PC-3 (cell line): ENCODE measurements at regions of chr11 and their contacts with region 1.

Region 1: GRCh38 chr11:27904358-27905055 is 203.4 kb downstream of the KIF18A start:
- DNase-seq: peak; percentile 85
- ATAC-seq: peak; percentile 78
- H3K4me3 ChIP-seq: peak overlapping the region; percentile 39; the same call in 1 of the 2 replicates
- H3K27ac ChIP-seq: peak overlapping the region; percentile 97
- H3K4me1 ChIP-seq: peaks cover 53% of the 10 kb centered on the region
- H3K27me3 ChIP-seq: no peaks in the 10 kb centered on the region
- CTCF ChIP-seq: no peak

Region 2: GRCh38 chr11:27945348-27945747 is 40.8 kb after region 1 on chr11:
- CTCF ChIA-PET with region 1: no interaction called
- POLR2A ChIA-PET with region 1: no interaction called
- intact Hi-C with region 1: no loop called
- DNase-seq: no peak
- ATAC-seq: no peak
- H3K4me3 ChIP-seq: no peak overlapping the region
- H3K27ac ChIP-seq: no peak overlapping the region
- H3K4me1 ChIP-seq: no peaks in the 10 kb centered on the region
- H3K27me3 ChIP-seq: no peaks in the 10 kb centered on the region
- CTCF ChIP-seq: no peak

Region 3: DNA sequence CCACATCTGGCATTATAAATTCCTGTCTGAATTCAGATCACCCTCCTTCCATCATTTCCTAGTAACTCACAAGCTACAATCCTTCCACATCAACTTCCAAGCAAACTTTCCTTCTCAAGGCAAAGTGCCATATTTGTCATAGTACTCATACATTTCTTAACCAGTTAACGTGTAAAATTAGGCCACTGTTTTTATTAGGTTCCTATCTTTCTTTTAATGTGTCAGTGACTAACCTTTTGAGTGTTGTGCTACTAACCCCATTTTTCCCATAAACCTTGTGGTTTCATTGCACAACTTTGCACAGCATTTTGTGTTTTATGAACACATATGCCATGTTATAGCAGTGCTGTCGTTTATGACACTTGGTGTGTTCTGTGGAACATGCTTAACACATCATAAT is 113.3 kb after region 1 on chr11:
- CTCF ChIA-PET with region 1: no interaction called
- POLR2A ChIA-PET with region 1: no interaction called
- intact Hi-C with region 1: loop called (anchors 10 kb)
- DNase-seq: peak; percentile 48
- ATAC-seq: peak; percentile 59
- H3K4me3 ChIP-seq: no peak overlapping the region
- H3K27ac ChIP-seq: no peak overlapping the region
- H3K4me1 ChIP-seq: peaks cover 3% of the 10 kb centered on the region; the same call in 1 of the 2 replicates
- H3K27me3 ChIP-seq: no peaks in the 10 kb centered on the region
- CTCF ChIP-seq: no peak

Region 4: GRCh38 chr11:28049338-28050216 is 145.1 kb after region 1 on chr11:
- CTCF ChIA-PET with region 1: no interaction called
- POLR2A ChIA-PET with region 1: no interaction called
- intact Hi-C with region 1: loop called (anchors 10 kb)
- DNase-seq: peak; percentile 90
- ATAC-seq: peak; percentile 86
- H3K4me3 ChIP-seq: no peak overlapping the region
- H3K27ac ChIP-seq: peak overlapping the region; percentile 87
- H3K4me1 ChIP-seq: peaks cover 28% of the 10 kb centered on the region
- H3K27me3 ChIP-seq: no peaks in the 10 kb centered on the region
- CTCF ChIP-seq: no peak